ENCODE measurements at regions of chr1 and their contacts with region 1.

Region 1: DNA sequence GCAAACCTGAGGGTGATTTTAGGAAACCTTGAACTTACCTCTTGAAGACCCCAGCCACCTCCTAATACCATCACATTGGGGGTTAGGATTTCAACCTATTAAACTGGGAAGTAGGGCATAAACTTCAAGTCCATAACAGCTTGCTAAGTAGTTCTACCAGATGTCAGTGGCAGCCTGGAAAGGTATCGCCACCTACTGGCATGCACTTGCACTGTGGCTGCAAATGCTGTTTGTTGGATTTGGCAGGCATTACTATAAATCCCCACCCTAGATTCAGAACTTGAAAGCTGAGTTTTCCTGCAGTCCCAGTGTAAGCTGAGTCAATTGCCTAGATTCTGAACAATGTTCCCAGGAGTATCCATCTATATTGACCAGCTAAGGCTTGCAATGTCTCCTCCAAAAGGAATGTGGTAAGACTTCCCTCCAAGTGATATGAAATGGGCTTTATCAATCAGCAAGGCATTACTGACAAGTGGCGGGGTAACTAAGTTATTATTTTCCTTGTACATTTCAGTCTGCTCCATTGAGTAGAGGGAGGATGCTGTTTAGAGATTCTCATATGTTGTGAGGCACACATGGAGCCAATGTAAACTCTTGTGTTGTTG is 474.5 kb downstream of the PTPRC start:
- DNase-seq: peak; percentile 52 to 81
- ATAC-seq: peak; percentile 77 to 87 (median 84)
- H3K4me3 ChIP-seq: no peak overlapping the region
- H3K4me3 Mint-ChIP-seq: no peak overlapping the region
- H3K27ac ChIP-seq: no peak overlapping the region
- H3K27ac Mint-ChIP-seq: peak overlapping the region in 1 of 2 donors; percentile 9
- H3K4me1 ChIP-seq: no peaks in the 10 kb centered on the region
- H3K4me1 Mint-ChIP-seq: peaks cover 11 to 18% of the 10 kb centered on the region in 2 donors
- H3K27me3 ChIP-seq: no peaks in the 10 kb centered on the region
- H3K27me3 Mint-ChIP-seq: no peaks in the 10 kb centered on the region
- CTCF ChIP-seq: peak; percentile 95

Region 2: GRCh38 chr1:198771563-198772153 is 341.7 kb before region 1 on chr1:
- intact Hi-C with region 1: loop called (anchors 5 kb)
- DNase-seq: peak in 1 of 2 donors; percentile 58
- ATAC-seq: peak in 2 of 3 donors; percentile 44 to 48
- H3K4me3 ChIP-seq: no peak overlapping the region
- H3K4me3 Mint-ChIP-seq: no peak overlapping the region
- H3K27ac ChIP-seq: no peak overlapping the region
- H3K27ac Mint-ChIP-seq: no peak overlapping the region
- H3K4me1 ChIP-seq: no peaks in the 10 kb centered on the region
- H3K4me1 Mint-ChIP-seq: peaks cover 4% of the 10 kb centered on the region in 2 donors
- H3K27me3 ChIP-seq: no peaks in the 10 kb centered on the region
- H3K27me3 Mint-ChIP-seq: no peaks in the 10 kb centered on the region
- CTCF ChIP-seq: peak; percentile 60

Region 3: GRCh38 chr1:199182186-199182843 is 68.9 kb after region 1 on chr1:
- intact Hi-C with region 1: no loop called
- DNase-seq: no peak
- ATAC-seq: peak in 2 of 3 donors; percentile 41 to 46
- H3K4me3 ChIP-seq: no peak overlapping the region
- H3K4me3 Mint-ChIP-seq: no peak overlapping the region
- H3K27ac ChIP-seq: no peak overlapping the region
- H3K27ac Mint-ChIP-seq: peak overlapping the region; percentile 73 to 81
- H3K4me1 ChIP-seq: no peaks in the 10 kb centered on the region
- H3K4me1 Mint-ChIP-seq: peaks cover 14 to 18% of the 10 kb centered on the region in 2 donors
- H3K27me3 ChIP-seq: no peaks in the 10 kb centered on the region
- H3K27me3 Mint-ChIP-seq: no peaks in the 10 kb centered on the region
- CTCF ChIP-seq: no peak

Measured in natural killer cell (primary cell).